Body of pancreas (tissue), 4 donors: ENCODE measurements at regions of chr9 and their contacts with region 1.

Region 1: GRCh38 chr9:20930836-20931235 is 100.6 kb downstream of the HACD4 start:
- DNase-seq: no peak
- ATAC-seq: no peak
- H3K4me3 ChIP-seq: no peak overlapping the region
- H3K27ac ChIP-seq: no peak overlapping the region
- H3K4me1 ChIP-seq: no peaks in the 10 kb centered on the region
- H3K27me3 ChIP-seq: no peaks in the 10 kb centered on the region
- CTCF ChIP-seq: no peak
- POLR2A ChIP-seq: no peak

Region 2: DNA sequence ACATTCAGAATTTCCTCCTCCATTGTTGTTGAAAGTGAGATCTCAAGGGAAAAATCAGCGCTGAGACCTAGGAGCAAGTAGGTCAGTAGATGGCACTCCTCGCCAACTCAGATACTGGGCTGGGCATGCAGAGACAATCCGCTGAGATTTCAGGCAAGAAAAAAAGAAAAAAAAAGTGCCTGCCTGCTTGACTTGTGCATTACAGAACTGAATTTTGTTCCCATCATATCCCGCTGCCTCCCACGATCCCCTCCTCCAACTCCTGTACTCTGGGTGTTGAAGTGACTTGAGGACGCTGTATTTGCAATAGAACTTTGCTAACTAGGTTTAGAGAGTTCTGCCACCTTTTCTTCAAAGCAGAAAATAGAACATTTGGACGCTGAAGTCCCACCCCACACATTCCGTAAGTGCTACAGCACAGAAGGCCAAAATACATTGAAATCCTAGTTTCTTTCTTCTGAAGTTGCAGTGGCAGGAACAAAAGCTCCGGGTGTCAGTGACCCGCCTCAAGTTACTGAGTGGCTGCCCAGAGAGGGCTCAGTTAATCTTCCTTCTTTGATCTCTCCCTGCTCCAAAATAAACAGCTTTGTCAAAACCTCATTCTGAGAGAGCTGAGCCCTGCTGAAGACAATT is 574.3 kb before region 1 on chr9:
- intact Hi-C with region 1: loop called (anchors 10 kb)
- DNase-seq: peak; percentile 68 to 81 (median 74)
- ATAC-seq: peak; percentile 76
- H3K4me3 ChIP-seq: no peak overlapping the region
- H3K27ac ChIP-seq: peak overlapping the region in 3 of 4 donors; percentile 44 to 60 (median 49)
- H3K4me1 ChIP-seq: peaks cover 53% of the 10 kb centered on the region
- H3K27me3 ChIP-seq: no peaks in the 10 kb centered on the region
- CTCF ChIP-seq: peak; percentile 51 to 86 (median 78)
- POLR2A ChIP-seq: no peak

Region 3: GRCh38 chr9:20962536-20963225 is 31.8 kb after region 1 on chr9:
- intact Hi-C with region 1: no loop called
- DNase-seq: no peak
- ATAC-seq: no peak
- H3K4me3 ChIP-seq: no peak overlapping the region
- H3K27ac ChIP-seq: no peak overlapping the region
- H3K4me1 ChIP-seq: no peaks in the 10 kb centered on the region
- H3K27me3 ChIP-seq: no peaks in the 10 kb centered on the region
- CTCF ChIP-seq: no peak
- POLR2A ChIP-seq: no peak